Caco-2 (cell line): ENCODE measurements at regions of chr15 and their contacts with region 1.

Region 1: GRCh38 chr15:29283381-29283780 is 13.8 kb upstream of the NSMCE3 start:
- DNase-seq: no peak
- H3K4me3 ChIP-seq: no peak overlapping the region
- H3K4me3 Mint-ChIP-seq: no peak overlapping the region
- H3K27ac Mint-ChIP-seq: no peak overlapping the region
- H3K4me1 ChIP-seq: no peaks in the 10 kb centered on the region
- H3K4me1 Mint-ChIP-seq: no peaks in the 10 kb centered on the region
- H3K27me3 ChIP-seq: no peaks in the 10 kb centered on the region
- H3K27me3 Mint-ChIP-seq: peaks cover 19% of the 10 kb centered on the region
- CTCF ChIP-seq: no peak

Region 2: GRCh38 chr15:29331669-29332068 is 48.3 kb after region 1 on chr15:
- CTCF ChIA-PET with region 1: no interaction called
- POLR2A ChIA-PET with region 1: no interaction called
- intact Hi-C with region 1: loop called (anchors 5 kb)
- DNase-seq: no peak
- H3K4me3 ChIP-seq: no peak overlapping the region
- H3K4me3 Mint-ChIP-seq: no peak overlapping the region
- H3K27ac Mint-ChIP-seq: no peak overlapping the region
- H3K4me1 ChIP-seq: no peaks in the 10 kb centered on the region
- H3K4me1 Mint-ChIP-seq: no peaks in the 10 kb centered on the region
- H3K27me3 ChIP-seq: no peaks in the 10 kb centered on the region
- H3K27me3 Mint-ChIP-seq: peaks cover 4% of the 10 kb centered on the region
- CTCF ChIP-seq: no peak